ENCODE measurements at regions of chr1 and their contacts with region 1.

Region 1: DNA sequence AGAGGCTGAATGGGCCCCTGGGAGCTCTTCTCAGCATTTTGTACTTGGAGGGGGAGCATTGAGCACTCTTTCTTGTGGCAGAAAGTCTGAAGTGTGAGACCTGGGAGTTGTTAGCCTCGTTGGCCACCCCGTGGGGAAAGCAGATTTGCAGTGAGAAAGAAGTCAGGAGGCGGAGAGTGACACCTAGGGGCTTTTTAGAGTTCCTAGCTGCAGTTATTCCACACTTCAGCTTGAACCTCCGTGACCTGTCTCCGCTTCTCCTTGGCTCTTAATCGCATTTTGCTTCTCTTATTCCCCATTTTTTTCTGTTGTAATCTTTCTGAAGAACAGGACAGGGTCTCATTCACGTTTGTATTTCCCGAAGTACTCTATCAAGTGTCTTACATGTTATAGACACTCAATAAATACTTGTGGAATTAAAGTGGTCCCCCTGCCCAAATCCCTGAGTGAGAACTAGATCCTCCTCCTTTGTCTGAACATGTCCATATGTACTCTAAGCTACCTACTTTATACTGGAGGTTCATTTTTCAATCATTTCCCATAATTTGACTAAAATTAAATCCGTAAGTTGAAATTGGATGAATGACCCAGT is 14.5 kb upstream of the C1orf141 start:
- DNase-seq: no peak
- H3K4me3 ChIP-seq: no peak overlapping the region
- H3K27ac ChIP-seq: no peak overlapping the region
- H3K4me1 ChIP-seq: peaks cover 7 to 10% (median 9%) of the 10 kb centered on the region in 4 donors
- H3K27me3 ChIP-seq: no peaks in the 10 kb centered on the region
- CTCF ChIP-seq: peak; percentile 63 to 82 (median 79)
- EP300 ChIP-seq: no peak
- POLR2A ChIP-seq: no peak

Region 2: DNA sequence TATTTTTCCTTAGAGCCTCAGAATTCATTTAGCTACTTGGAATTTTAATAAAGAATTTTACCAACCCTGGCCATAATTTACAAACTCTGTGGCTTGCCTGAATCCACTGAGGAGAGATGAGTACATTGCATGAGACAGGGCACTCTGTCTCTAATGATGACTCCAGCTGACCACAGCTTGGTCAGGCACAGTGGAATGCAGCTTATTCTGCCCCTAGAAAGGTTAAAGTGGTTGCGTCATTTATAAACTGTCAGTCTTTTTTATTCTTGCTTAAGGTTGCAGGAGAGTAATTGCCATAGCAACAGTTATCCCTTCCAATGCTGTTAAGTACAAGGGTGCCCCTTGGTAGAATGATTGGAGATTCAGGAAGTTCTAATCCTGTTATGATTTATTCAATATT is 1328.3 kb before region 1 on chr1:
- intact Hi-C with region 1: no loop called
- DNase-seq: no peak
- H3K4me3 ChIP-seq: no peak overlapping the region
- H3K27ac ChIP-seq: no peak overlapping the region
- H3K4me1 ChIP-seq: no peaks in the 10 kb centered on the region
- H3K27me3 ChIP-seq: no peaks in the 10 kb centered on the region
- CTCF ChIP-seq: no peak
- EP300 ChIP-seq: no peak
- POLR2A ChIP-seq: no peak

Region 3: GRCh38 chr1:66764994-66765578 is 384.2 kb before region 1 on chr1:
- intact Hi-C with region 1: loop called (anchors 2 kb)
- DNase-seq: no peak
- H3K4me3 ChIP-seq: no peak overlapping the region
- H3K27ac ChIP-seq: no peak overlapping the region
- H3K4me1 ChIP-seq: peaks cover 0 to 3% (median 0%) of the 10 kb centered on the region in 4 donors
- H3K27me3 ChIP-seq: no peaks in the 10 kb centered on the region
- CTCF ChIP-seq: peak; percentile 69 to 77 (median 72)
- EP300 ChIP-seq: no peak
- POLR2A ChIP-seq: no peak

Region 4: DNA sequence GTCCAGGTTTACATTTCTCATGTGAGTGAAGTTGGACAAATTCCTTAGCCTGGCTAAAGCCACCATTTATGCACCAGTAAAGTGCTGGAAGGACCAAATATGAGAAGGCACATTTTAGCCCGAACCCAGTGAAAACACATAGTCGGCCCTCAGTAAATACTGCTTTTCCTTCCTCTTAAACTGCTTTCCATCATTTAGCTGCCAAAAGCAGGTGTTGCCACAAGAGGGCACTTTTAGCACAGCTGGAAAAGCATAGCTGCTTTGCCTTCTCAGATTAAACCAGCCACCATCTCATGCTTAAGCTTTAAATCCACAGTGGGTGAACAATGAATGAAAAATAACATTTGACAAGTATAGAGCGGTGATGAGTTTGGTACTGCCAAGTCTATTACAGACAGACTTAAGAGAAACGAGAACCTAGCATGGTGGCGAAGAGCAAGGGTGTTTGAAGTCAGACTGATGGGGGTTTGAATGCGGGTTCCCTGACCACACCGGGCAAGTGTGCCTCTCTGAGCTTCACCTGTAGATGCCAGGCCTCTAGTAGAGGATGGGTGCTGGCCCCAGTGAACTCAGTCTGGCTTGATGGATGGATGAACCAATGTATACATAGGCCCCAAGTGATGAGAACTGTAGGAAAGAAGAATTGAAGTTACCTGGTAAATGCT is 153.1 kb before region 1 on chr1:
- intact Hi-C with region 1: loop called (anchors 1 kb)
- DNase-seq: no peak
- H3K4me3 ChIP-seq: no peak overlapping the region
- H3K27ac ChIP-seq: peak overlapping the region in 1 of 4 donors; percentile 7
- H3K4me1 ChIP-seq: peaks cover 2 to 28% (median 23%) of the 10 kb centered on the region in 4 donors
- H3K27me3 ChIP-seq: no peaks in the 10 kb centered on the region
- CTCF ChIP-seq: peak; percentile 73 to 80 (median 79)
- EP300 ChIP-seq: no peak
- POLR2A ChIP-seq: no peak